K562 (cell line): ENCODE measurements at regions of chr3 and their contacts with region 1.

Region 1: GRCh38 chr3:134485718-134486576 is at the starts of genes ANAPC13 and CEP63:
- DNase-seq: peak; percentile 80 to 96 (median 84)
- ATAC-seq: peak; percentile 93
- H3K4me3 ChIP-seq: peak within 1 kb of the TSS; percentile 74
- H3K27ac ChIP-seq: peak within 1 kb of the TSS; percentile 92
- H3K4me1 ChIP-seq: peaks cover 8 to 17% of the 10 kb centered on the region in 2 experiments; a peak in 4 of 5 replicates
- H3K27me3 ChIP-seq: no peaks in the 10 kb centered on the region
- CTCF ChIP-seq: no peak
- EP300 ChIP-seq: no peak
- POLR2A ChIP-seq: peak; percentile 90
- RAD21 ChIP-seq: no peak
- polyA plus RNA-seq, gene ANAPC13: 198 to 238 TPM
- polyA plus RNA-seq, gene CEP63: 5.1 to 5.6 TPM

Region 2: DNA sequence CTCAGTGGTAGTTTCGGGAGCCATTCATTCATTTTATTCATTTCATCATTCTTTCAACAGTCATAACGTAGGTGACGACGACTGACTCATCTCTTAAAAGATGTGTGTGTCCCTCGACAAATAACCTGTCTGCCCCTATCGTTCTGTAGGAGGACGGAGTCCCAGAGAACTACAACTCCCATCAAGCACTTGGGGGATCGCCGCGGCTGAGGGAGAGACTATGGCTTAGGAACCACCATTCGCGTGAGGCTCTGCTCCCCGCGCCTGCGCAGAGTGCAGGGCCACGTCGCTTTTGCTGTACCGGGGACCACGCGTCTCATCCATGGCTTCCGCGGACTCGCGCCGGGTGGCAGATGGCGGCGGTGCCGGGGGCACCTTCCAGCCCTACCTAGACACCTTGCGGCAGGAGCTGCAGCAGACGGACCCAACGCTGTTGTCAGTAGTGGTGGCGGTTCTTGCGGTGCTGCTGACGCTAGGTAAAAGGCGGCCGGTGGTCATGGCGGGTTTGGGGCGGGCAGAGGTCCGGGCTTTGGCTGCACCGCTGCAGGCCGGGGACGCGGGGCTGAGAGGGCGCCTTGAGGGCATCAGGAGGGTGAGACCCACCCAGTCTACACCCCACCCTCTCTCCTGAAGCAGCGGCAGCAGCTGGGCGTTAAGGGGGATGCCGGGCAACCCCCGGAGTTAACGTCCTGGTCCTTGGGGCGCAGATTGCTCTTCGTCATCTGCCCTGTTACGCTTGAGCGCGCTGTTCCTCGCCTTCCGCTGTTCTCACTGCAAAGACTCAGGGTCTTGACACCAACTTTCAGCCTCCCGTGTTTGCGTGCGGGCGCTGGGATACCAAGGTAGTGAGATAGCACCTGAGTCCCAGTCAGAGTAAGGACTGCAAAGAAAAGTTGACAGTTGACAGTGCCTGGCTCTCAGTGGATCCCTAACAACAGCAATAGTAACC is 680.1 kb before region 1 on chr3 and contains the start of gene SRPRB:
- CTCF ChIA-PET with region 1: no interaction called
- POLR2A ChIA-PET with region 1: no interaction called
- in situ Hi-C with region 1: loop called (anchors 25 kb)
- intact Hi-C with region 1: no loop called
- DNase-seq: peak; percentile 90 to 94 (median 92)
- ATAC-seq: peak; percentile 99
- H3K4me3 ChIP-seq: peak within 1 kb of the TSS; percentile 89
- H3K27ac ChIP-seq: peak within 1 kb of the TSS; percentile 80
- H3K4me1 ChIP-seq: no peaks in the 10 kb centered on the region; a peak in 1 of 5 replicates
- H3K27me3 ChIP-seq: no peaks in the 10 kb centered on the region
- CTCF ChIP-seq: no peak
- EP300 ChIP-seq: no peak
- POLR2A ChIP-seq: peak; percentile 92
- RAD21 ChIP-seq: no peak
- polyA plus RNA-seq, gene SRPRB: 29.5 to 37.5 TPM